Activated T-helper 1 cell treated with anti-CD3 and anti-CD28 coated beads, Interleukin-12 subunit alpha, Interleukin-12 subunit beta, Interleukin-2, Interleukin-4 antibody, amounts not matched to agents 30 ng/mL and 10 ng/mL and 1 ng/mL, durations not matched to agents 14 hours and 24 hours and 36 hours (primary cell): ENCODE measurements at regions of chr7 and their contacts with region 1.

Region 1: GRCh38 chr7:105876091-105876963 is at the start of gene ATXN7L1:
- DNase-seq: peak; percentile 80
- H3K4me3 Mint-ChIP-seq: peak within 1 kb of the TSS; percentile 96
- H3K27ac Mint-ChIP-seq: peak within 1 kb of the TSS; percentile 90
- H3K4me1 Mint-ChIP-seq: peaks cover 42% of the 10 kb centered on the region
- H3K27me3 Mint-ChIP-seq: peaks cover 35% of the 10 kb centered on the region
- total RNA-seq, gene ATXN7L1: 7.2 and 8.5 TPM in 2 replicates

Region 2: GRCh38 chr7:105224884-105225651 is 651.3 kb before region 1 on chr7:
- intact Hi-C with region 1: no loop called
- DNase-seq: no peak
- H3K4me3 Mint-ChIP-seq: no peak overlapping the region
- H3K27ac Mint-ChIP-seq: no peak overlapping the region
- H3K4me1 Mint-ChIP-seq: peaks cover 16% of the 10 kb centered on the region
- H3K27me3 Mint-ChIP-seq: no peaks in the 10 kb centered on the region

Region 3: DNA sequence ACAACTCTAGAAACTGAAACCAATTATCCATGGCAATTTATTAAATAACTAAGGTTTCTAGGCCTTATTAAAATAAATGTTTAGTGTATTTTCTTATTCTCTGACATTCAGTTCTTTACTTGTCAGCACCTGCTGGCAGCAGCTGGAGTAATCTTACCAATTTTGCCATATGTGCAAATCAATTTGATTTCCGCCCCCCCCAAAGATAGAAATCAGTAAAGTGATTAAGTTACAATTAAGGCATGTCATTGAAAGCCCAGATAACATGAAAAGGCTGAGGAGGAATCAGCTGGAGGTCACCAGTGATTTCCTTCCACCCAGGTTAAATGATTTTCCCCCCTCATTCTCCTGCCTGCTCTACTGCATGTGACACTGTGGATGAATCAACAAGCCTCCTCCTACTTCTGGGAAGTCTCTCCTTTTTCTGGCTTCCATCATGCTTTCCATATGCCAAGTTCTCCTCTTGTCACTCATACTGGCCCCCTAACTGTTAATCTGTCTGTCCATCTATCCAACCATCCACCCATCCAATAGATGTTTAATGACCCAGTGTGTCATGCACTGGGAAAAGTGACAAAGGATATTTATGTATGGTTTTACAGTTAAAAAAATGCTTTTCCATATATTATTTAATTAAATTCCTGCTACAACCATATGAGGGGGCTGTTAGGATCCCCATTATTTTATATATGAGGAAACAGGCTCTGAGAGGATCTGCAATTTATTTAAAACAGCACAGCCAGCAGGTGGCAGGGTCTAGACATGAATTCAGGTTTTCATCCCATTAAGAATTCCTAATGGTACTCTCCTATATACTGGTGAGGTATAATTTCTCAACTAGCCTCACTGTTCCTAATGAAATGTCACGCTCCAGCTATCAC is 116.4 kb before region 1 on chr7:
- intact Hi-C with region 1: loop called (anchors 1 kb)
- DNase-seq: no peak
- H3K4me3 Mint-ChIP-seq: no peak overlapping the region
- H3K27ac Mint-ChIP-seq: no peak overlapping the region
- H3K4me1 Mint-ChIP-seq: peaks cover 26% of the 10 kb centered on the region
- H3K27me3 Mint-ChIP-seq: peaks cover 12% of the 10 kb centered on the region

Region 4: GRCh38 chr7:105849122-105849855 is 27.0 kb before region 1 on chr7:
- intact Hi-C with region 1: loop called (anchors 1 kb)
- DNase-seq: peak; percentile 70
- H3K4me3 Mint-ChIP-seq: peak overlapping the region; percentile 60
- H3K27ac Mint-ChIP-seq: peak overlapping the region; percentile 80
- H3K4me1 Mint-ChIP-seq: peaks cover 59% of the 10 kb centered on the region
- H3K27me3 Mint-ChIP-seq: peaks cover under 1% of the 10 kb centered on the region

Region 5: GRCh38 chr7:105924945-105925344 is 48.6 kb after region 1 on chr7:
- intact Hi-C with region 1: loop called (anchors 1 kb)
- DNase-seq: no peak
- H3K4me3 Mint-ChIP-seq: no peak overlapping the region
- H3K27ac Mint-ChIP-seq: peak overlapping the region; percentile 56
- H3K4me1 Mint-ChIP-seq: peaks cover 18% of the 10 kb centered on the region
- H3K27me3 Mint-ChIP-seq: peaks cover 12% of the 10 kb centered on the region

Region 6: DNA sequence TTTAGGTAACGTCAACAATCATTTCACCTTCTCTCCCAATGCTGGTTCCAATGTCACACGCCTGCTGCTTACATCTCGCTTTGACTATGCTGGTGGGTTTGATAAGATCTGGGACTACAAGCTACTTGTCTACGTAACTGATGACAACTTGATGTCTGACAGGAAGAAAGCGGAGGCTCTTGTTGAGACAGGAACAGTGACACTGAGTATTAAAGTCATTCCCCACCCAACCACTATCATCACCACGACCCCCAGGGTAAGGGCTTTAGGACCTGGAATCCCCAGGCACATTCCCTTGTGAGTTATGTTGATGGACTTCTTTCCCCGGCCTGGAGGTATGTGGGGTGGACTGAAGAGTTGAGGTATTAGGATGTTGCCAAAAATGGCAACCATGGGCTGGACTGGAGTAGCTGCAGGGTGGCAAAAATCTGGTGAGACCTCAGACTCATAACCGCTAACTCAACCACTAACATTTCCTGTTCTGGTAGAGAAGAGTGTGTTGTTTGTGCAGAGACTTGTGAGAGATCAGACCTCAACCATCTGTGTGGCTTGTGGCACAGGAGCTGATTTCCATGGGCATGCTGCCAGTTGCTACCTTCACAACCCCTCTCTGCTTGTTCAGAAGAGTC is 146.0 kb after region 1 on chr7:
- intact Hi-C with region 1: loop called (anchors 1 kb)
- DNase-seq: peak; percentile 56
- H3K4me3 Mint-ChIP-seq: peak overlapping the region; percentile 37
- H3K27ac Mint-ChIP-seq: peak overlapping the region; percentile 77
- H3K4me1 Mint-ChIP-seq: peaks cover 49% of the 10 kb centered on the region
- H3K27me3 Mint-ChIP-seq: peaks cover 13% of the 10 kb centered on the region

Region 7: DNA sequence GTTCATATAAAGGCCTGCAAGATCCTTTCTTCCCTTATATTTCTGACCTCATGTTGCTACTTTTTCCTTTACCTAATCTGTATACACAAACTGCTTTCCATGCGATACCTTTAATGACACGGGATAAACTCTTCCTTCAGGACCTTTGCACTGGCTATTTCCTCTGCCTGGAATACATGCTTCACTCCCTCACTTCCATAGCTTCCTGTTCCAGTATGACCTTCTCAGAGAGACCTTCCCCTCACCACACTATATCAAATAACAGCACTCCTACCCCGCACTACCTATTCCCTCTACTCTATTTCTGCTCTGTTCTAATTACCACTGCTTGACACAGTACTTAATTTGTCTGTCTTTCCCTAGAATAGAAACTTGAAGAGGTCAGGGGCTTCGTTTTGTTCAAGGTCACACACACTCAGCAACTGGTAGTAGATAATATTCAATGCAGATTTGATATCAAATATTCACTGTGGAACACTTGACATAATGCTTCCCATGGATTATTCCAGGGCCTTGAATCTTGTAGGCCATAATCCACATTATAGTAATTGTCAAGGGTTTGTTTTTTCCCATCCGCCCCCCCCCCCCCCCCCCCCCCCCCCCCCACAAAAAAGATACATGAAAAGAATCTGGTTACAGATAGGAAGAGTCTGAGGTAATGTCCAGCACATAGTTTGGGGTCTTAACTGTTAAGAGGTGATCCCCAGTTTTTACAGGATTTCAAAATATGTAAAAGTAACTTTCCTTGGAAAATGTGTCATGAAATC is 224.7 kb after region 1 on chr7:
- intact Hi-C with region 1: no loop called
- DNase-seq: no peak
- H3K4me3 Mint-ChIP-seq: no peak overlapping the region
- H3K27ac Mint-ChIP-seq: no peak overlapping the region
- H3K4me1 Mint-ChIP-seq: peaks cover 48% of the 10 kb centered on the region
- H3K27me3 Mint-ChIP-seq: no peaks in the 10 kb centered on the region